Ovary (tissue), 10 donors: ENCODE measurements at regions of chr10 and their contacts with region 1.

Region 1: GRCh38 chr10:132536971-132537712 is 445 bp upstream of the INPP5A start:
- DNase-seq: peak; percentile 100
- H3K4me3 ChIP-seq: peak overlapping the region; percentile 84
- H3K27ac ChIP-seq: peak overlapping the region; percentile 75 to 90
- H3K4me1 ChIP-seq: peaks cover 20% of the 10 kb centered on the region
- H3K27me3 ChIP-seq: no peaks in the 10 kb centered on the region
- CTCF ChIP-seq: peak; percentile 34 to 76 (median 76)
- EP300 ChIP-seq: peak; percentile 60
- POLR2A ChIP-seq: peak; percentile 62

Region 2: DNA sequence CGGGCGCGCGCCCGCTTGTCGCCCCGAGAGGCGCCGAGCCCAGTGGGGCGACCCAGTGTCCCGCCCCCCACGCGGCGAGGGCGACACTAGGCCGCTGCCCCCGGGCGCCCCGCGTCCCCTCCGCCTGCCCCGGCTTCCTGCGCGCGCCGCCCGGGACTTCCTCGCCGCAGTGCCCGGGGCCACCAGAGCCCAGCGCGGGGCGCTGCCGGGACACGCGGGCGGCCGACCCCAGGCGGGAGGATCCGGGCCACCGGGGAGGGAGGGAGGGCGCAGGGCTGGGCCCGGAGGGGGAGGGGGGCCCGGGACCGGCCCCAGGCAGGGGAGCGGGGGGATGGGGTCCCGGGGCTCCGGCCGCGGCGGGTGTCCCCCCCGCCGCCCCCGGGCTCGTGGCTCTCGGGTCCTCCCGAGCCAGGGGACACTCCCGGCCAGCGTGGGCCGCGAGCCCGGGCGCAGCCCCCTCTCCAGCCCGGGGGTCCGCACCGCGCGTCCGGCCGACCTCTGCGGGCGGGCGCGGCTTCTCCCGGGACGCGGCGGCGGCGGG is 140.6 kb before region 1 on chr10:
- intact Hi-C with region 1: loop called in 2 of 4 experiments (anchors 2 to 10 kb)
- DNase-seq: peak; percentile 68 to 81 (median 74)
- H3K4me3 ChIP-seq: peak overlapping the region; percentile 74
- H3K27ac ChIP-seq: peak overlapping the region; percentile 97 to 98
- H3K4me1 ChIP-seq: peaks cover 11% of the 10 kb centered on the region
- H3K27me3 ChIP-seq: no peaks in the 10 kb centered on the region
- CTCF ChIP-seq: peak in 2 of 3 donors; percentile 52 to 56
- EP300 ChIP-seq: no peak
- POLR2A ChIP-seq: no peak

Region 3: GRCh38 chr10:132516771-132517725 is 20.1 kb before region 1 on chr10:
- intact Hi-C with region 1: loop called in 1 of 4 experiments (anchors 2 kb)
- DNase-seq: peak; percentile 95 to 98 (median 97)
- H3K4me3 ChIP-seq: peak overlapping the region; percentile 21
- H3K27ac ChIP-seq: peak overlapping the region; percentile 75 to 87
- H3K4me1 ChIP-seq: peaks cover 47% of the 10 kb centered on the region
- H3K27me3 ChIP-seq: no peaks in the 10 kb centered on the region
- CTCF ChIP-seq: no peak
- EP300 ChIP-seq: no peak
- POLR2A ChIP-seq: peak; percentile 14

Region 4: GRCh38 chr10:132627666-132628531 is 90.8 kb after region 1 on chr10:
- intact Hi-C with region 1: loop called (anchors 5 to 10 kb)
- DNase-seq: peak in 4 of 5 donors; percentile 47 to 67 (median 56)
- H3K4me3 ChIP-seq: no peak overlapping the region
- H3K27ac ChIP-seq: peak overlapping the region; percentile 41 to 73
- H3K4me1 ChIP-seq: peaks cover 44% of the 10 kb centered on the region
- H3K27me3 ChIP-seq: no peaks in the 10 kb centered on the region
- CTCF ChIP-seq: no peak
- EP300 ChIP-seq: no peak
- POLR2A ChIP-seq: no peak

Region 5: DNA sequence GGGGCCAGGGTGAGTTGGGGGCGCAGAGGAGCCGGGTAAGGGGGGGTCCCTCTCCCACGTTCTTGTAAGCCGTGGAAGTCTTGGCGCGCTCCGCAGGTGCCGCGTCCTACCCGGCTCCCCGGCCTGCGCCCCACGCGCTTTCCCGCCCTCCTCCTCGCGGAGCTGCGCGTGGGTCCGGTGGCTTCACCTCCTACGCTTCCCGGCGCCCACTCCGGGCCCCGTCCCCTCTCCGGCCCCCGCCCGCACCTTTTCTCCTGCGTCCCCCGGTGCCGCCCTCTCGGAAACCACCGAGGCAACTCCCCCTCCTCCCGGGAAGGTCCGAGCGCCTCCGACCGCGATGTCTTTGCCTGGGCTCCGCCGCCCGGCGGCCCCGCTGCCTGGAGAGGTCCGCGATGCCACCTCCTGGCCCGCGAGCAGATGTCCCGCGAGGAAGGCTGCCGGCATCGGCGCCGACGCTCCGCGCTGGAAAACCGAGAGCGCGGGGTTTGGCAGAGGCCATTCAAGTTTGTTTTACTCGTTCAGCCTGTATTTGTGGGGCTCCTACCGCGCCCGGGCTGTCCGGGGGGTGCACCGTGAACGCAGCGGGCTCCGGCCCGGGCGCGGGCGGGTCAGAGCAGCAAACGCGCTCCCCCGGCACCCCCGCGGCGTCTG is 251.2 kb after region 1 on chr10:
- intact Hi-C with region 1: loop called in 1 of 4 experiments (anchors 10 kb)
- DNase-seq: no peak
- H3K4me3 ChIP-seq: no peak overlapping the region
- H3K27ac ChIP-seq: no peak overlapping the region
- H3K4me1 ChIP-seq: no peaks in the 10 kb centered on the region
- H3K27me3 ChIP-seq: peaks cover 22% of the 10 kb centered on the region
- CTCF ChIP-seq: no peak
- EP300 ChIP-seq: no peak
- POLR2A ChIP-seq: no peak